Pancreas (tissue), 10 donors: ENCODE measurements at regions of chr18 and their contacts with region 1.

Region 1: GRCh38 chr18:63823518-63824219 is 48.5 kb downstream of the SERPINB7 start:
- DNase-seq: peak in 5 of 6 donors; percentile 25 to 66 (median 45)
- ATAC-seq: peak in 3 of 4 donors; percentile 55 to 74 (median 65)
- H3K4me3 ChIP-seq: no peak overlapping the region
- H3K27ac ChIP-seq: no peak overlapping the region
- H3K4me1 ChIP-seq: no peaks in the 10 kb centered on the region
- H3K27me3 ChIP-seq: no peaks in the 10 kb centered on the region
- CTCF ChIP-seq: peak; percentile 19 to 44 (median 28)

Region 2: GRCh38 chr18:63553117-63553516 is 270.6 kb before region 1 on chr18:
- intact Hi-C with region 1: no loop called
- DNase-seq: no peak
- ATAC-seq: peak in 3 of 4 donors; percentile 55 to 66 (median 66)
- H3K4me3 ChIP-seq: no peak overlapping the region
- H3K27ac ChIP-seq: no peak overlapping the region
- H3K4me1 ChIP-seq: no peaks in the 10 kb centered on the region
- H3K27me3 ChIP-seq: no peaks in the 10 kb centered on the region
- CTCF ChIP-seq: no peak

Region 3: GRCh38 chr18:63936156-63936931 is 112.7 kb after region 1 on chr18:
- intact Hi-C with region 1: loop called in 1 of 3 experiments (anchors 10 kb)
- DNase-seq: peak; percentile 80 to 93 (median 86)
- ATAC-seq: peak; percentile 100
- H3K4me3 ChIP-seq: peak overlapping the region; percentile 4 to 52 (median 44)
- H3K27ac ChIP-seq: no peak overlapping the region
- H3K4me1 ChIP-seq: no peaks in the 10 kb centered on the region
- H3K27me3 ChIP-seq: peaks cover 0 to 4% (median 0%) of the 10 kb centered on the region in 4 donors
- CTCF ChIP-seq: peak; percentile 64 to 77 (median 66)

Region 4: DNA sequence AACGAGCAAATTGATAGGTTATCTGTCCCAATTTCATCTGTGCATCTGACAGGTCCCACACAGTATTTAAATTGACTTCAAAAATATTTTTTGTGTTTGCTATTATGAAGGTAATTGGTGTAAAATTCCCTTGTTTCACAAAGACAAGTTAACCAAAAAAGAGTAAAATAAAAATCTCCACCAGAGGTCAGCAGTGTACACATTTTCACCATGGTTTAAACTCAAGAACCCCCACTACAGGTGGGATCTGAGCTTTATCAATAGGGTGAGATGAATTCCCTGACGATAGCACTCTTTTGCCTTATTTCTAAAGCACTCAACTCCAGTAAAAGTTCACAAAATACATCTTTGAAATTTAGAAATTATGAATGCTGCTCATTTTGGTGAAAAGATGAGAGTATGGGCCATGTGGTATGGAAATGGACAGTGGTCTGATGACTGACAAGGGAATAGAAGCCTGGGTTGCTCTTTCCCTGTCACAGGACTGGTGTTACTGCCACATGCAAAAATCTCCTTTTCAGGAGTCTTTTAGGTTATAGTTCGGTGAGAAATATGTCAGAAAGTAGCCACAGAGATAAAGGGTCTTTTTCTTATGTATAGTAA is 214.2 kb after region 1 on chr18:
- intact Hi-C with region 1: no loop called
- DNase-seq: no peak
- ATAC-seq: peak in 2 of 4 donors; percentile 51 to 54
- H3K4me3 ChIP-seq: no peak overlapping the region
- H3K27ac ChIP-seq: no peak overlapping the region
- H3K4me1 ChIP-seq: no peaks in the 10 kb centered on the region
- H3K27me3 ChIP-seq: no peaks in the 10 kb centered on the region
- CTCF ChIP-seq: peak in 3 of 4 donors; percentile 29 to 43 (median 43)